ENCODE measurements at regions of chr16 and their contacts with region 1.

Region 1: GRCh38 chr16:67521095-67521804 is 7.4 kb upstream of the RIPOR1 start:
- DNase-seq: peak; percentile 97 to 98
- H3K4me3 ChIP-seq: peak overlapping the region; percentile 53
- H3K4me3 Mint-ChIP-seq: peak overlapping the region; percentile 80
- H3K27ac Mint-ChIP-seq: peak overlapping the region; percentile 89
- H3K4me1 ChIP-seq: peaks cover 24% of the 10 kb centered on the region
- H3K4me1 Mint-ChIP-seq: peaks cover 32% of the 10 kb centered on the region
- H3K27me3 ChIP-seq: no peaks in the 10 kb centered on the region
- H3K27me3 Mint-ChIP-seq: no peaks in the 10 kb centered on the region
- CTCF ChIP-seq: peak; percentile 86 to 100

Region 2: DNA sequence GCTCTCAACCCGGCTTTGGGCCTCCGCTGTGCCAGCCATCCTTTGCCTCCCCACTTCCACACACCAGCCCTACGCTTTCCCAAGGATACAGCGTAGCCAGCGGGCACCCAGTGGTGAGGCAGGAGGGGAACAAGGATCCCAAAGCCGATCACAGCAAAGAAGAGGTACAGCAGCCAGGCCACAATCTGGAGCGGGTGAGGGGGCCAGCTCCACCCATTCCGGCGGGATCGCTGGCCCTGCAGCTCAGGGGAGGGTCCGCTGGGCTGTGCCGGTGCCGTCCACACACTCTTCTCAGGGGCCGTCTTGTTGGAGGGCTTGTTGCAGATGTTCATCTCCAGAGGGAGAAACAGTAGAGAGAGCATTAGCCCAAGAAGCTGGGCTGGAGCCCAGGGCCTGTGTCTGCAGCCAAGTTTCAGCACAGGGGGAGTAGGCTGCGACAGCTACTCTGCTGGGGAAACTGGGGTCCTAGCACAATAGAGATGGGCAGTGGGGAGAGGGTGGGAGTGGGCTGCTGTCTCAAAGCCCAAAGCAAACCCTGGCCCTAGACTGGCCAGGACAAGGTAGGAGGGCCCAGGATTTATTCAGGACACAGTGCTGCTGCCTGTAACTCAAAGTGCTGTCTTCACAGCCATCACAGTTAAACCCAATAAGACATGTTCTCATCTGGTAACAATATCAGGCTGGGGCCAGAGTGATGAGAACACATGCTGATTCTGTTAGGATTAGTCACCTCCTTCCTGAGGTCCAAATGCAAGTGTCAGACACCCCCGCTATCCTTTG is 114.9 kb before region 1 on chr16:
- CTCF ChIA-PET with region 1: no interaction called
- POLR2A ChIA-PET with region 1: no interaction called
- intact Hi-C with region 1: no loop called
- DNase-seq: no peak
- H3K4me3 ChIP-seq: no peak overlapping the region
- H3K4me3 Mint-ChIP-seq: no peak overlapping the region
- H3K27ac Mint-ChIP-seq: peak overlapping the region; percentile 96
- H3K4me1 ChIP-seq: peaks cover 39% of the 10 kb centered on the region
- H3K4me1 Mint-ChIP-seq: peaks cover 50% of the 10 kb centered on the region
- H3K27me3 ChIP-seq: no peaks in the 10 kb centered on the region
- H3K27me3 Mint-ChIP-seq: no peaks in the 10 kb centered on the region
- CTCF ChIP-seq: no peak

Region 3: GRCh38 chr16:67419502-67420275 is 101.6 kb before region 1 on chr16:
- CTCF ChIA-PET with region 1: no interaction called
- POLR2A ChIA-PET with region 1: no interaction called
- intact Hi-C with region 1: no loop called
- DNase-seq: peak in 1 of 2 experiments; percentile 36
- H3K4me3 ChIP-seq: no peak overlapping the region
- H3K4me3 Mint-ChIP-seq: no peak overlapping the region
- H3K27ac Mint-ChIP-seq: peak overlapping the region; percentile 8
- H3K4me1 ChIP-seq: peaks cover 45% of the 10 kb centered on the region
- H3K4me1 Mint-ChIP-seq: peaks cover 26% of the 10 kb centered on the region
- H3K27me3 ChIP-seq: no peaks in the 10 kb centered on the region
- H3K27me3 Mint-ChIP-seq: no peaks in the 10 kb centered on the region
- CTCF ChIP-seq: no peak

Region 4: GRCh38 chr16:67480833-67481560 is 40.3 kb before region 1 on chr16 and contains the start of gene ATP6V0D1:
- CTCF ChIA-PET with region 1: interaction called, 35 read pairs
- POLR2A ChIA-PET with region 1: interaction called, 3 read pairs
- intact Hi-C with region 1: no loop called
- DNase-seq: peak; percentile 98 to 100
- H3K4me3 ChIP-seq: peak within 1 kb of the TSS; percentile 94
- H3K4me3 Mint-ChIP-seq: peak within 1 kb of the TSS; percentile 98
- H3K27ac Mint-ChIP-seq: peak within 1 kb of the TSS; percentile 94
- H3K4me1 ChIP-seq: peaks cover 15% of the 10 kb centered on the region
- H3K4me1 Mint-ChIP-seq: peaks cover 19% of the 10 kb centered on the region
- H3K27me3 ChIP-seq: no peaks in the 10 kb centered on the region
- H3K27me3 Mint-ChIP-seq: no peaks in the 10 kb centered on the region
- CTCF ChIP-seq: peak; percentile 89 to 96
- total RNA-seq, gene ATP6V0D1: 107 and 110 TPM in 2 replicates

Region 5: GRCh38 chr16:67537270-67537635 is 16.0 kb after region 1 on chr16:
- CTCF ChIA-PET with region 1: interaction called, 45 read pairs
- POLR2A ChIA-PET with region 1: no interaction called
- intact Hi-C with region 1: loop called (anchors 1 kb)
- DNase-seq: peak; percentile 56 to 73
- H3K4me3 ChIP-seq: peak overlapping the region; percentile 80
- H3K4me3 Mint-ChIP-seq: peak overlapping the region; percentile 80
- H3K27ac Mint-ChIP-seq: peak overlapping the region; percentile 60
- H3K4me1 ChIP-seq: peaks cover 22% of the 10 kb centered on the region
- H3K4me1 Mint-ChIP-seq: peaks cover 41% of the 10 kb centered on the region
- H3K27me3 ChIP-seq: no peaks in the 10 kb centered on the region
- H3K27me3 Mint-ChIP-seq: no peaks in the 10 kb centered on the region
- CTCF ChIP-seq: no peak

Region 6: GRCh38 chr16:67561824-67562525 is 40.7 kb after region 1 on chr16:
- CTCF ChIA-PET with region 1: interaction called, 57 read pairs
- POLR2A ChIA-PET with region 1: interaction called, 5 read pairs
- intact Hi-C with region 1: loop called (anchors 1 kb)
- DNase-seq: peak; percentile 99
- H3K4me3 ChIP-seq: peak overlapping the region; percentile 100
- H3K4me3 Mint-ChIP-seq: peak overlapping the region; percentile 95
- H3K27ac Mint-ChIP-seq: peak overlapping the region; percentile 93
- H3K4me1 ChIP-seq: peaks cover 14% of the 10 kb centered on the region
- H3K4me1 Mint-ChIP-seq: peaks cover 23% of the 10 kb centered on the region
- H3K27me3 ChIP-seq: no peaks in the 10 kb centered on the region
- H3K27me3 Mint-ChIP-seq: no peaks in the 10 kb centered on the region
- CTCF ChIP-seq: no peak

Region 7: DNA sequence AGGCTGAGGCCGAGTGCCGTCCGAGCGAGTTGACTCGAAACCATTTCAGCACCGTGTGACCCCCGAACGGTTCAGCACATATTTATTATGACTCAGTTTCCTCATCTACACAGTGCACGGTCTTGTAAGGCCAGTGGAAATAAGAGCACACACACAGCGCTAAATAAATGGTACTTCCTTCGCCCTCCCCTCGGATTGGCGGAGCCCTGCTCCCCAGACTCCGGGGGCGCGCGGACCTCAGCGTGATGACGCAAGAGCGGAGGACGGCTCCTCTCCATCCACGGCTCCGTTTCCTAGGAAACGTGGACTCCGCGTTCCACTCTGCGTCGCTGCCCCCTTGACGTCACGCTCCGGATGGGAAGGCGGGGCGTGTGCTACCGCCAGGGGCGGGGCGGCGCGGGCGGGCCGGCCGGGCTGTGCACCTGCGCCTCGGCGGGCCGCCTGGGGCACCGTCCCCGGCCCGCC is 139.3 kb after region 1 on chr16 and contains the start of gene PARD6A:
- CTCF ChIA-PET with region 1: interaction called, 60 read pairs
- POLR2A ChIA-PET with region 1: interaction called, 7 read pairs
- intact Hi-C with region 1: no loop called
- DNase-seq: peak; percentile 96 to 97
- H3K4me3 ChIP-seq: peak within 1 kb of the TSS; percentile 52
- H3K4me3 Mint-ChIP-seq: peak within 1 kb of the TSS; percentile 96
- H3K27ac Mint-ChIP-seq: peak within 1 kb of the TSS; percentile 96
- H3K4me1 ChIP-seq: peaks cover 12% of the 10 kb centered on the region
- H3K4me1 Mint-ChIP-seq: no peaks in the 10 kb centered on the region
- H3K27me3 ChIP-seq: no peaks in the 10 kb centered on the region
- H3K27me3 Mint-ChIP-seq: no peaks in the 10 kb centered on the region
- CTCF ChIP-seq: no peak
- total RNA-seq, gene PARD6A: 7.1 and 8.4 TPM in 2 replicates

Region 8: DNA sequence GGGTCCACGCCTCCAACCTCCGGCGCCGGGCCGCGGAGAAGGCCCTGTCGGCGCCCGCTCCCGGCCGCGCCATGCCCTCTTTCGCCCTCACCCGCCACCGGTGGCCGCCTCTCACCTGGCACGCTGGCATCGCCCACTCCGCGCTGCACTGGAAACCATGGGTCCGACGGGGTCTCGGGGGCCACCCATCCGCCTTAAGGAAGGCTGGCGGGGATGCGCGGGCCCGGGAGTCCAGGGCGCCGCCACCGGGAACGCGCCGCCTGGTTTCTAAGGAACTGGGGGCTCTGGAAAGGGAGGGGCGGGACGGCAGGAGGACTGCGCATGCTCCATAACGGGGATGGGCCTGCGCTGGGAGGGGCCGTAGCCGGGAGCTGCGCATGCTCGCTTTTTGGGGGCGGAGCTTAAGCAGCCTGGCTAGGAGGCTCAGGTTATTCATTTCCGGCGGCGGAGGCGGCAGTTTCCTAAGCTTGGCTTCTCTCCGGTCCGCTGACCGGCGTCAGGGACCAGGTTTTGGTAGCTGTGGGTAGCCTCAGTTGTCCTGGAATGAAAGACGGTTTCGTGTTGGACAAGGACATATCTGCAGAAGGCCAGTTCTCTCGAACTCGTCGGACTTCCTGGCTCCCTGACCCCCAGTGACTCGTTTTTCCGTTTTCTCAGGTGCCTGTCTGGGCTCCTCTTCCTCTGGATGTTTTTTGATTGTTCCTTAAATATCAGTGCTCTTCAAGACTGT is 198.0 kb after region 1 on chr16 and contains the start of gene GFOD2:
- CTCF ChIA-PET with region 1: interaction called, 13 read pairs
- POLR2A ChIA-PET with region 1: no interaction called
- intact Hi-C with region 1: no loop called
- DNase-seq: peak; percentile 97 to 99
- H3K4me3 ChIP-seq: peak within 1 kb of the TSS; percentile 84
- H3K4me3 Mint-ChIP-seq: peak within 1 kb of the TSS; percentile 89
- H3K27ac Mint-ChIP-seq: peak within 1 kb of the TSS; percentile 86
- H3K4me1 ChIP-seq: peaks cover 25% of the 10 kb centered on the region
- H3K4me1 Mint-ChIP-seq: peaks cover 20% of the 10 kb centered on the region
- H3K27me3 ChIP-seq: no peaks in the 10 kb centered on the region
- H3K27me3 Mint-ChIP-seq: no peaks in the 10 kb centered on the region
- CTCF ChIP-seq: no peak
- total RNA-seq, gene GFOD2: 12.7 and 13.4 TPM in 2 replicates